Activated CD4-positive, alpha-beta memory T cell treated with anti-CD3 and anti-CD28 coated beads for 36 hours (primary cell): ENCODE measurements at regions of chr6 and their contacts with region 1.

Region 1: DNA sequence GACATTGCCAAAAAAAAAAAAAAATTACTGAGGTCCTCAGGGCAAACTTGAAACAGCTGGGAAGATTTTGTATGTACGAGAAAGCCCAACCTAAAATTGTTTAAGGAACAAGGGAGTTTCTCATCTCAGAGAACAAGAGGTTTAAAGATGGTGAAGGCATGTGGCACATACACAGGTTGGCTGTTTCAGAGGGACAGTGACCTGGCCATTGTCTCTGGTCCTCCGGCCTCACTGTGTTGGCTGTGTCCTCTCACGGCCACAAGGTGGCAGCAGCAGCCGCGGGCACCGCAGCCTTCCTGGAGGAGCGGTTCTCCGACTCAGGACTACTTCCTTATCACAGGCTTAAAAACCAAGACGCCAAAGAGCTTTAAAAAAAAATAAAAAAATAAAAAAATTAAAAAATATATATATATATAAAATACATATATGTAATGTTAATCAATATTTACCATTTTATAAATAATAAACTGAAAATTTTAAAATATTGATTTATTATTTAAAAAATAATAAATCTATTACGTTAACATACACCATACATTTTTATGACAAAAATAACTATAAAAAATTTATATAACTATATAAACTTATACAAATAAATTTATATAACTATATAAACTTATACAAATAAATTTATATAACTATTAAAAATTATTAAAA is 52.8 kb downstream of the GTF2H5 start:
- DNase-seq: peak; percentile 86
- H3K4me3 Mint-ChIP-seq: no peak overlapping the region
- H3K27ac Mint-ChIP-seq: no peak overlapping the region
- H3K4me1 Mint-ChIP-seq: no peaks in the 10 kb centered on the region
- H3K27me3 Mint-ChIP-seq: no peaks in the 10 kb centered on the region

Region 2: DNA sequence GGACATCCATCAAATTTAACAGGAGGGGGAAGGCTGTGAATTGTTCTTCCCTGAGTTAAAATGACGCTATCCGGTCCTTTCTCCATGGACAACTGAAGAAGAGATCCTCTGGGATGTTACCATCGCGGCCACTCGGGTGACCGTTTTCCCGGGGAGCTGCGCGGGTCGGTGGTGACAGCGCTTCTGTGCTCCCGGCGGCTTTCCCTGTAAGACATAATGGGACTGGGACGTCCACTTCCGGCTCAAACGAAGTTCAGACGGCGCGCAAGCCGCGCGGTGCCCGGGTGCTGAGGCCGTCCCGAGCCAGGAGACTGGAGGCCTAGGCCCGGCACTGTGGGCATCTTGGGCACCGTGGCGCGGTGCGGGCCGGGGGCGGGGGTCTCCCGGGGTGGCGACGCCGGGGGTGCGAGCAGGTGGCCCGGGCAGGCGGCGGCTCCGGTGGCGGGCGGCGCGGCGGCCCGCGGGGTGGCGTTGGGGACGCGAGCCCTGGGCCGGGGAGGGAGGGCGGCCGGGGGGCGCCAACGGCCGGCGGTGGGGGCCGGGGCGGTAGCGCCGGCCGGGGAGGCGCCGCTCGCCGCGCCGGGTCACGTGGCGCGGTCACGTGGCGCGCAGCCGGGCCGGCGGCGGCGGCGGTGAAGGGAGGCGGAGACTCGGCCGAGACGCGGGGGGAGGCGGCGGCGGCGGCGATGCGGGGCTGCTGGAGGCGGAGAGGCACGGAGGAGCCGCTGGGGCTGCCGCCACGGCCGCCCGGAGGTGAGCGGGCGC is 10.8 kb after region 1 on chr6:
- CTCF ChIA-PET with region 1: interaction called, 21 read pairs
- POLR2A ChIA-PET with region 1: no interaction called
- intact Hi-C with region 1: no loop called
- DNase-seq: peak; percentile 76
- H3K4me3 Mint-ChIP-seq: peak overlapping the region; percentile 81
- H3K27ac Mint-ChIP-seq: peak overlapping the region; percentile 46
- H3K4me1 Mint-ChIP-seq: peaks cover 31% of the 10 kb centered on the region
- H3K27me3 Mint-ChIP-seq: no peaks in the 10 kb centered on the region

Region 3: GRCh38 chr6:158509465-158509864 is 288.6 kb after region 1 on chr6:
- CTCF ChIA-PET with region 1: interaction called, 10 read pairs
- POLR2A ChIA-PET with region 1: no interaction called
- intact Hi-C with region 1: no loop called
- DNase-seq: no peak
- H3K4me3 Mint-ChIP-seq: no peak overlapping the region
- H3K27ac Mint-ChIP-seq: no peak overlapping the region
- H3K4me1 Mint-ChIP-seq: peaks cover 7% of the 10 kb centered on the region
- H3K27me3 Mint-ChIP-seq: no peaks in the 10 kb centered on the region

Region 4: DNA sequence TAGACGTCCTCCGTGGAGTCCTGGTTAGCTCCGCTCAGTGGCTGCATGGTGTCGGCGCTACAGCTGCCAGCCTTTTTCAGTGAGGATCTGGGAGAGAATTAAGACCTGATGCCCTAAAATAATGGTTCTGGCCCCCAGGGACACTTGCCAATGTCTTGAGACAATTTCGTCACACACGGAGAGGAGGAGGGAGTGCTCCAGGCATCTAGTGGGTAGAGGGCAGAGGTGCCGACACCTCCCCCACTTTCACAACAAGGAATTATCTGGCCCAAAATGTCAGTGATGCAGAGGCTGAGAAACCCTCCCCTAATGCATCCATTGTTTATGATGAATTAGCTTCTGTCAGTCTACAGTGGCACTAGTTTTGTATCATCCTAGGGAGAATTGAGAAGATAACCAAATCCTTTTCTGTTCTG is 363.3 kb after region 1 on chr6:
- CTCF ChIA-PET with region 1: interaction called, 12 read pairs
- POLR2A ChIA-PET with region 1: no interaction called
- intact Hi-C with region 1: no loop called
- DNase-seq: no peak
- H3K4me3 Mint-ChIP-seq: no peak overlapping the region
- H3K27ac Mint-ChIP-seq: peak overlapping the region; percentile 16
- H3K4me1 Mint-ChIP-seq: peaks cover 2% of the 10 kb centered on the region
- H3K27me3 Mint-ChIP-seq: no peaks in the 10 kb centered on the region

Region 5: GRCh38 chr6:158686791-158687381 is 466.0 kb after region 1 on chr6:
- CTCF ChIA-PET with region 1: interaction called, 18 read pairs
- POLR2A ChIA-PET with region 1: no interaction called
- intact Hi-C with region 1: loop called (anchors 2 kb)
- DNase-seq: peak; percentile 38
- H3K4me3 Mint-ChIP-seq: no peak overlapping the region
- H3K27ac Mint-ChIP-seq: peak overlapping the region; percentile 47
- H3K4me1 Mint-ChIP-seq: peaks cover 64% of the 10 kb centered on the region
- H3K27me3 Mint-ChIP-seq: no peaks in the 10 kb centered on the region